OCI-LY7 (cell line): ENCODE measurements at regions of chr10 and their contacts with region 1.

Region 1: GRCh38 chr10:18104223-18104872 is 35.9 kb upstream of the CACNB2 start:
- DNase-seq: peak; percentile 39
- H3K4me3 ChIP-seq: no peak overlapping the region
- H3K27ac ChIP-seq: no peak overlapping the region
- H3K4me1 ChIP-seq: no peaks in the 10 kb centered on the region
- CTCF ChIP-seq: peak; percentile 91

Region 2: DNA sequence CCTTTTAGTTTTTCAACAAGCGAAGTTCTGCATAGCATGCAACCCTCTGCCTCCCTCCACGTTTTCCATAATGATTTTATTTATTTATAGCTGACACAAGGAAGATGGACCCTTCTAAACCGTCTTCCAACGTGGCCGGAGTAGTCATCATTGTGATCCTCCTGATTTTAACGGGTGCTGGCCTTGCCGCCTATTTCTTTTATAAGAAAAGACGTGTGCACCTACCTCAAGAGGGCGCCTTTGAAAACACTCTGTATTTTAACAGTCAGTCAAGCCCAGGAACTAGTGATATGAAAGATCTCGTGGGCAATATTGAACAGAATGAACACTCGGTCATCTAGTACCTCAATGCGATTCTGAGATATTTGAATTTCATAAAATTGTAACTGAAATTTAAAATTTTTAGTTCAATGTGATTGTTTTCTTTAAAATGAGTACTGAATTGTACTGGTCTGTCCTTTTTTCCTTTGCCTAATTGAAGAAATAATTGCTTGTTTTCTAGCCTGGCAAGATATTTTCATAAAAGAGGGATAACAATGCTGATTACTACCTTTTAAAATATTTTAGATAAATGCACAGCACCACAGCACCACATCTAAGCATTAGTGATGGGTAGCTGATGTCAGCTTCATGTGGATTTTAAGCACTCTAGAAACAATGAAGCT is 194.1 kb before region 1 on chr10:
- CTCF ChIA-PET with region 1: no interaction called
- POLR2A ChIA-PET with region 1: no interaction called
- intact Hi-C with region 1: loop called (anchors 2 kb)
- DNase-seq: peak; percentile 50
- H3K4me3 ChIP-seq: no peak overlapping the region
- H3K27ac ChIP-seq: no peak overlapping the region
- H3K4me1 ChIP-seq: no peaks in the 10 kb centered on the region
- CTCF ChIP-seq: peak; percentile 82